Naive thymus-derived CD4-positive, alpha-beta T cell (primary cell): ENCODE measurements at regions of chr21 and their contacts with region 1.

Region 1: DNA sequence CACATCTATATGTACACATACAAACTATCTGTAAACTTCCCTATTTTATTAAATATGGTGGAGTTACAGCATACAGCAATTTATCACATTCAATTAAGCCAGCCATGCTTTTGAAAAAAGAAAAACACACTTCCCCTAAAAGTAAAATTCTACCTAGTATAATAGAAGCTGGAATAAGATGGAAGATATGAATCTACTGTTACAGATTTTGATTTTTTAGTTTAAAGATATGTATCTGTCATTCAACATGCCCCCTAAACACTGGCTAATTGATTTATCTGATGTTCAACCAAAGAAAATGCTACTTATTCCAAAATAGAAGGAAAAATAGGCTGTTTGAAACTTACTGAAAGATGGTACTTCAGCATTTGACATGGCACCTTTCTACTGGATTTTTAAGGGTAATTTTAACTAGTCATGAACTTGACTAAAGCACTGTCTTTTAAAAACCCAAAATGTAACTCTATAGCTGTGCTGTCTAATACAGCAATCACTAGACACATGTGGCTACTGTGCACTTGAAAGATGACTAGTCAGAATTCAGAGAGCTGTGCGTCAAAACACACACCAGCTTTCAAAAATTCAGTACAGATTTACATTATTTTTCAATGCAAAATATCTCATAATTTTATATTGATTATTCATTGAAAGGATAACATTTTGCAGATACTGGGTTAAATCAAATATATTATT is 25.0 kb downstream of the NRIP1 start:
- DNase-seq: no peak
- ATAC-seq: no peak
- H3K4me3 ChIP-seq: no peak overlapping the region
- H3K4me3 Mint-ChIP-seq: no peak overlapping the region
- H3K27ac ChIP-seq: no peak overlapping the region
- H3K27ac Mint-ChIP-seq: no peak overlapping the region
- H3K4me1 ChIP-seq: peaks cover 0 to 3% of the 10 kb centered on the region in 2 donors
- H3K4me1 Mint-ChIP-seq: peaks cover 4 to 61% (median 39%) of the 10 kb centered on the region in 7 donors
- H3K27me3 ChIP-seq: no peaks in the 10 kb centered on the region
- H3K27me3 Mint-ChIP-seq: no peaks in the 10 kb centered on the region

Region 2: DNA sequence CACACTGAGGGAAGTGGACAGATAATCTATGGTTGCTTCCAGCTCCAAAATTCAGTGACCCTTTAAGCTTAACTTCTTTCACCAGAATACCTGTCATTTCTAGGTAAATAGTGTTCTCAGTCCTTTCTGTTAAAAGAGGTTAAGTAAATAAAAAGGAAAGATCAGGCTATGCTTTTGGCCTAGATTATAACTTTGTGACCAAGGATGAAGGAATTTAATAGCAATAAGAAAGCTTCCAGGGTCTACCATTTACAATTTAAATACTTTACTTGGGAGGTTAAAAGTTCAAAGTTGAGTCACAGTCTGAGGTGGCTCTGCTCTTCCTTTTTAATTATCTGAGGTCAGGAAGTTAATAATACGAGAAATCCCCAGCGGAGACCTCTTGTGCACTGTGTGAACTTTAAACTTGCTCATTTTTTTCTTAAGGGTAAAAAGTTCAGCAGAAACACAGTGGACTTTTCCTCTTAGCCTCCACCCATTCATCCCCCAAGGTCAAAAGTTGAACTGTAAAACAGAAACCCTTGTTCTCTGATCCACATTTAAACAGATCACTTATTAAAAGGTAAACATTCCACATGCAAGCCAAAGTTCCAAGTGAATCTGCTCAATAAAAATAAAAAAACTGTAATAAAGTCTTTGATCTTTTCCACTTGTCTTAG is 162.1 kb before region 1 on chr21:
- CTCF ChIA-PET with region 1: no interaction called
- POLR2A ChIA-PET with region 1: no interaction called
- intact Hi-C with region 1: no loop called
- DNase-seq: no peak
- ATAC-seq: peak; percentile 72
- H3K4me3 ChIP-seq: no peak overlapping the region
- H3K4me3 Mint-ChIP-seq: no peak overlapping the region
- H3K27ac ChIP-seq: no peak overlapping the region
- H3K27ac Mint-ChIP-seq: peak overlapping the region in 1 of 9 donors; percentile 32
- H3K4me1 ChIP-seq: no peaks in the 10 kb centered on the region
- H3K4me1 Mint-ChIP-seq: peaks cover 0 to 4% (median 0%) of the 10 kb centered on the region in 7 donors
- H3K27me3 ChIP-seq: no peaks in the 10 kb centered on the region
- H3K27me3 Mint-ChIP-seq: peaks cover 0 to 4% (median 0%) of the 10 kb centered on the region in 5 donors

Region 3: DNA sequence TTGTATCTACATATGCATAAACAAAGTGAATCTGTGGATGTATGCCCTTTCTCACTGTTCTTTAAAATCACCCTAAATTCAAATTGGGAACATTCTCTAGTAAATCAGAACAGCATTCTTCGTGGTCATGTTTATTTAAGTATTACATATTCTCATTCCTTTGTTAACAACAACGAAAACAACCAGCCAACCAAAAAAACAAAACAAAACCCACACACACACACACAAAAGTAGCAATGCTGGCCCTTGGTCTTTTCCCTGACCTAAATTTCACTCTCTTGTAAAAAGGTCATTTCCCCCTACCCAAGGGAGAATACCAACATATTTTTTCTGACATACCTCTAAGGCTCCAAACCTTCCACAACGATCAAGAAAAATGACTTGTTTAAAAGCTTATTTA is 77.5 kb before region 1 on chr21:
- CTCF ChIA-PET with region 1: no interaction called
- POLR2A ChIA-PET with region 1: no interaction called
- intact Hi-C with region 1: loop called in 1 of 2 experiments (anchors 5 kb)
- DNase-seq: no peak
- ATAC-seq: no peak
- H3K4me3 ChIP-seq: no peak overlapping the region
- H3K4me3 Mint-ChIP-seq: no peak overlapping the region
- H3K27ac ChIP-seq: no peak overlapping the region
- H3K27ac Mint-ChIP-seq: peak overlapping the region in 1 of 9 donors; percentile 33
- H3K4me1 ChIP-seq: no peaks in the 10 kb centered on the region
- H3K4me1 Mint-ChIP-seq: peaks cover 0 to 14% (median 3%) of the 10 kb centered on the region in 7 donors
- H3K27me3 ChIP-seq: no peaks in the 10 kb centered on the region
- H3K27me3 Mint-ChIP-seq: no peaks in the 10 kb centered on the region

Region 4: DNA sequence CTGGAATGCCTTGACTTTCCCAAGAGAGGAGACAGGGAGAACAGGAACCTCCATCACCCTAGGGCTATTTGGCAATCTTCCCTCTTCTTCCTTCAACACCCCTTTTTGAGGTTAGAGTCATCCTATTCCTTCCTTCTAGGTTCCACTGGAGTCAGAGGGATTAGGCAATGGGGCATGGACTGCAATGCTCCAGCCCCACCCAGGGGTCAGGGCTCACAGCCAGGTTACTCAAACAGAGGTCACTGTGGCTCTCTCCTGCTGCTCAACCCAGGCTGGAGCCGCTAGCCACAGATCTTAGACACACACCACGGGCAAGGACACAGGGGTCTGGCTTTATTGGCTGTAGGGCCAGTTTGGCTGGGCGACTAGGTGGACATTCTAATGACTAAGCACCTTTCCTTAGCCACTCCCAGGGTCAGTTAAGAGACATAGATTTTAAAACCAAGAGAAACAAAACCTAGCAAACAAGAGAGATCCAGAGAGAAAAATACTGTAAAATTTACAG is 170.5 kb after region 1 on chr21:
- CTCF ChIA-PET with region 1: no interaction called
- POLR2A ChIA-PET with region 1: no interaction called
- intact Hi-C with region 1: no loop called
- DNase-seq: no peak
- ATAC-seq: peak; percentile 67
- H3K4me3 ChIP-seq: no peak overlapping the region
- H3K4me3 Mint-ChIP-seq: no peak overlapping the region
- H3K27ac ChIP-seq: no peak overlapping the region
- H3K27ac Mint-ChIP-seq: no peak overlapping the region
- H3K4me1 ChIP-seq: no peaks in the 10 kb centered on the region
- H3K4me1 Mint-ChIP-seq: peaks cover 0 to 4% (median 0%) of the 10 kb centered on the region in 7 donors
- H3K27me3 ChIP-seq: peaks cover 0 to 3% of the 10 kb centered on the region in 2 donors
- H3K27me3 Mint-ChIP-seq: peaks cover 1 to 20% (median 12%) of the 10 kb centered on the region in 5 donors